ENCODE measurements at regions of chr12 and their contacts with region 1.

Region 1: DNA sequence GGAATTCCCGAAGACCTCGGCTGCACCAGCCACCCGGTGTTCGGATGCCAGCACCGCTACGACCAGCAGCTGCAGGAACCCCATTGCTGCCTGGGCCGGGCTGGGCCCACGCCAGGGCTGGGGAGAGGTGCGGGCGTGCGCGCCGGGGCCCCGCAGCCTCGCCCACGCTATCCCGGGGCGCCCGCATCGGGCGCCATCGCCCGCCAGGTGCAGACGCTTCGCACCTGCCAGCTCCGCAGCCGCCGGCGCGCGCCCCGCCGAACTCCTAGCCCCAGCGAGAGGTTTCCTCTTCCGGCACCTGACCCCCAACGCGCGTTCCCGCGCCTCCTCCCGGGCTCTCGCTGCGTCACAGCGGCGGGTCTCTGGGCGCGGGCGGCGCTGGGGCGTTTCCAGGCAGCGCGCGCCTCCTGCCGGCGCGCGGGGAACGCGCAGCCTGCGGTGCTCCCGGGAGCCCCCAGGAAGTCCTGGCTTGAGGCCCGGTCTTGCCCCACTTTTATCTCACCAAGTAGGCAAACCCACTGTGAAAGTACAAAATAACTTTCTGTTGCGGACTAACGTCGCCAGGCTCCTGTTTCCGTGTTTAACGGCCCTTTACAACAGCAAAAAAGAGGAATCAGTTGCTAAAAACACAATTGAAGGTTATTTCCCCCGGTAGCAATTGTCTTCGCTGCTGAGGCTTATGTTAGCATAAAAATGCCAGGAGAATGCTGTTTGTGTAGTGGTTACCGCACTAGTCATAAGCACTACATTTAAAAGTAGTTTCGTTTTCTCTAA is at the start of gene TM7SF3:
- DNase-seq: peak; percentile 94
- H3K4me3 Mint-ChIP-seq: peak within 1 kb of the TSS; percentile 91
- H3K27ac Mint-ChIP-seq: peak within 1 kb of the TSS; percentile 90
- H3K4me1 Mint-ChIP-seq: peaks cover 61% of the 10 kb centered on the region
- H3K27me3 Mint-ChIP-seq: peaks cover 2% of the 10 kb centered on the region
- total RNA-seq, gene TM7SF3: 43.5 and 47.0 TPM in 2 replicates

Region 2: DNA sequence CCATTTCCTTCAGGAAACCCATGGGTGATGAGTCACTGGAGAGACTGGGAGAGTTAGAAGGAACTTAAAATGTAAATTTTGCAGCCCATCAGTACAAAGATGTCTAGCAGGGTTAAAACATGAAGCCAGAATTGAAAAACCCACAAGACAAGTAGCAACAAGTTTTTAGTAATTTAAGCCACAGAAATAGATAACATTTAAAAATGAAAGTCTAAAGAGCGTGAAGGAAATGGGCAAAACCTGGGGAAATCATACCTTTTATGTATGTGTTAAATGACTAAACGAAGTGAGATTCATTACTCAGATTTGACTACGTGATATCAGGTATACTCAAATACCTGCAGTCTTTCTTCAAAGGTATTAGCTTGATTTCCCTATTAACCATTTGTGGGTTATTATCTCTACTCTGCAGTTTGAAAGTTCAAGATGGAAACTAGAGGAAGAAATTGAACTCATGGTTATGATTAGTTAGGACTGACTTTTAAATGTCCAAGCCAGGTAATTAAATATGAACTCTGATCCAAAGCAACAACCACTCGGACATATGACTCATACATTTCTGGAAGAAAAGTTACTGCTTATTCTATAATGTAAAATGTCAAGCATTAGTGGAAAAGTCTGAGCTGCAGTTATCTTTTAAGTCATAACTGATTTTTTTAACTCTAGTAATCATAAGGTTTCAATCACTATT is 265.4 kb before region 1 on chr12:
- intact Hi-C with region 1: loop called (anchors 5 kb)
- DNase-seq: no peak
- H3K4me3 Mint-ChIP-seq: peak overlapping the region; percentile 40
- H3K27ac Mint-ChIP-seq: peak overlapping the region; percentile 70
- H3K4me1 Mint-ChIP-seq: peaks cover 53% of the 10 kb centered on the region
- H3K27me3 Mint-ChIP-seq: no peaks in the 10 kb centered on the region

Region 3: GRCh38 chr12:26791301-26791791 is 222.9 kb before region 1 on chr12:
- intact Hi-C with region 1: no loop called
- DNase-seq: no peak
- H3K4me3 Mint-ChIP-seq: no peak overlapping the region
- H3K27ac Mint-ChIP-seq: no peak overlapping the region
- H3K4me1 Mint-ChIP-seq: peaks cover 31% of the 10 kb centered on the region
- H3K27me3 Mint-ChIP-seq: no peaks in the 10 kb centered on the region

Region 4: DNA sequence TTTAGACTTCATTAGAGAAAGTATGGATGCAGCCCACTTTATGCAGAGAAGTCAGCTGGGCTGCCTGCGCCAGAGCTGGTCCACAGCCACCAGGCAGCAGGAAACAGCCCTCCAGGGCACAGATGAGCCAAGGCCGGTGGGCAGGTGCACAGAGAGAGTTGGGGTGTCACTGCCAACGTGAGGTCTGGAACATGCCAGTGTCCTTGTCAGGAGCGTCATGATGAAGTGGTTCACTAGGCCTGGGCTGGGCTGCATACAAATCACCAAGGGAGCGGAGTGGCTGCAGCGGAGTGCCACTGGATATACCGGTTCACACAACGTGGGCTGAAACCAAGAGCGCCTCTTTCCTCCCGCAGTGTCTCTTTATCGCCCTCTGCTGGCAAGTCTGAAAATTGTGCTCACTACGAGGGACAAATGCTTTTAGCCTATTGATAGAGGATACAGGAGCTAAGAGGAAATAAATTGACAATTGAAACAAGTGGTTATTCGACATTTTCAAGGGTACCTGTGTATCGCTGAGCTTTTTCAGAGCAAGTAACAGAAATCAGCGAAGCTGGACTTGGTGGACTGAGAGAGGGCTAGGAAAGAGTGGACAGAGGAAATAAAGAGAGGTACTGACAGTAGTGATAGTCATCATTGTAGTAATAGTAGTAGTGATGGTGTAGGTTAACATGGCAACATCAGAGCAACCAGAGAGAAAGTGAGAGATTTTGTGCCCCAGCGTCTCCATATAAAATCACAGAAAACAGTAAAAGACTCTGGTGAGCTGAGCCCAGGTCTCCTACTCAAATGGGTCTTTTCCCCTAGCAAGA is 129.3 kb before region 1 on chr12:
- intact Hi-C with region 1: loop called (anchors 1 kb)
- DNase-seq: peak; percentile 78
- H3K4me3 Mint-ChIP-seq: peak overlapping the region; percentile 23
- H3K27ac Mint-ChIP-seq: no peak overlapping the region
- H3K4me1 Mint-ChIP-seq: peaks cover 8% of the 10 kb centered on the region
- H3K27me3 Mint-ChIP-seq: peaks cover 16% of the 10 kb centered on the region

Region 5: DNA sequence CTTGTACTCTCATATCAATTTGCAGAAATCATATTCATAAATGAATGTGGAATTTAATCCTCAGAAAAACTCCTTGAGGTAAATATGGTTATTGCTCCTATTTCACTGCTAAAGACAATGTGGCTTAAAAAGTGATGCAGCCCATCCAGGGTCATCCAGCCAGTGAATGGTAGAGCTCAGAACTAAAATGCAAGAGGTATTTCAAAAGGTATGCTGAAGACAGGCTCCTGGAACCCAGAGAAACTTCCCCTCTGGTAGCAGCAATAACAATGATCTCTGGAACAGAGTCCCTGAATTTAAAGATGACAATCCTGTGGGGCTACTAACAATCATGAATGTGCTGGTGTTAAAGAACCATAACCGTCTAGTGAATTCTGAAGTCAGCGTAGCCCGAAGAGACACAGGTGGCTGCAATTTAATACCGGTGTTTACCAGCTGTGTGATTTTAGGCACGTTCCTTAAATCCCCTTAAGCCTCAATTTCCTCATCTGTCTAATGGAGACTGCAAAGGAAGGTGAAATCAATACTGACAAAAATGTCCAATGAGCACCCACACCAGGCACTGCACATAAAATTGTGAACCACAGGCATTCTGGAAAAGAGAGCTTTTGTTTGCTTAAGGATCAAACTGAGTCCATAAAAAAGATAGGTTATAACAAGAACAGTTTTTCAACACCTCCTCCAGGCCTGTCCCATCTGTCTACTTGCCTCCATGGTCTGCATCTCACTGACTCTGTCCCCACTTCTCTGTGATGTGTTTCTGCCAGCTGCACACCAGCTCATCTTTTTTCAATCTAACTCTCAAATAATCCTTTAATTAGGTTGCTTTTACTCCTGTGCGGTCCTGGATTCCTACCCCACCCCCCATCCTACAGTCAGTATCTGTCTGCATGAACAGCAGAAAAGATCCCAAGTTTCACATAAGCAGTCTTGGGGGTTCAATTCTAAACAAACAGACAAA is 10.6 kb before region 1 on chr12:
- intact Hi-C with region 1: no loop called
- DNase-seq: no peak
- H3K4me3 Mint-ChIP-seq: no peak overlapping the region
- H3K27ac Mint-ChIP-seq: no peak overlapping the region
- H3K4me1 Mint-ChIP-seq: peaks cover 20% of the 10 kb centered on the region
- H3K27me3 Mint-ChIP-seq: no peaks in the 10 kb centered on the region

Region 6: GRCh38 chr12:27123642-27124041 is 109.4 kb after region 1 on chr12:
- intact Hi-C with region 1: loop called (anchors 1 kb)
- DNase-seq: no peak
- H3K4me3 Mint-ChIP-seq: no peak overlapping the region
- H3K27ac Mint-ChIP-seq: no peak overlapping the region
- H3K4me1 Mint-ChIP-seq: no peaks in the 10 kb centered on the region
- H3K27me3 Mint-ChIP-seq: peaks cover 7% of the 10 kb centered on the region

Region 7: GRCh38 chr12:27305673-27306456 is 291.6 kb after region 1 on chr12:
- intact Hi-C with region 1: loop called (anchors 1 kb)
- DNase-seq: no peak
- H3K4me3 Mint-ChIP-seq: no peak overlapping the region
- H3K27ac Mint-ChIP-seq: no peak overlapping the region
- H3K4me1 Mint-ChIP-seq: peaks cover 14% of the 10 kb centered on the region
- H3K27me3 Mint-ChIP-seq: no peaks in the 10 kb centered on the region